ENCODE measurements at regions of chr4 and their contacts with region 1.

Region 1: DNA sequence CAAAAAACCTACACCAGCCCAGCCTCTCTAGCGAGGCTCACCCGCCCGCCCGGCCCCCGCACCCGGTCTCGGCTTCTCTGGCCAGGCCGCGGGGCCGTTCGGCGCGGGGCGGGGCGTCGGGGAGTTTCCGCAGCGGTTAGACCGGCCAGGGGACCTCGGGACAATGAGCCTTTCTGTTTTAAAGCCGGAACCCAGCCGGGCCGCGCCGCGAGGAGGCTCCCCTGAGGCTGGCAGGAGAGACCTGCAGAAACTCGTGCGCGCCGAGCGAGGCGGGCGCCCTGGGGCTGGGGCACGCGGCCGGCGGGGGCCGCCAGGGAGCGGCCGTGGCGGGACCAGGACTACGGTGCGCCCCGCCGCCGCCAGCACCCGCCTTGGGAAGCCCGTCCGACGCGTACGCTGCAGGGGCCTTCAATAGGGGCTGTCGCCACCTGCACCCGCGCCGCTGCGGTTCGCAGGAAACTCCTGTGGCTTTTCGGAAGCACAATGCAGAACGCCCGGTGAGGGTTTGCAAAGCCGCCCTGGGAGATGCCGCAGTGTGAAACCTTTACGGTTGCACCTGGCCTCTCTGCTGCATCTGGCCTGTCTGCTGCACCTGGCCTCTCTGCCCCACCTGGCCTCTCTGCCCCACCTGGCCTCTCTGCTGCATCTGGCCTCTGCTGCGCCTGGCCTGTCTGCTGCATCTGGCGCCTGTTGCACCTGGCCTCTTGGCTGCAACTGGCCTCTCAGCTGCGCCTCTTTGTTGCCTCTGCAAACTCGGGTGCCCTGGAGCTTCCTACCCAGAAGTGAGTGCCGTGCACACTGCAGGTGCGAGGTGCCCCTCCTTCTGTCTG is 63.9 kb downstream of the TRAPPC11 start:
- DNase-seq: peak; percentile 65 to 75
- ATAC-seq: peak; percentile 64 to 84 (median 79)
- H3K4me3 ChIP-seq: peak overlapping the region; percentile 41 to 66 (median 58)
- H3K27ac ChIP-seq: peak overlapping the region in 9 of 10 donors; percentile 30 to 75 (median 58)
- H3K4me1 ChIP-seq: peaks cover 0 to 18% (median 7%) of the 10 kb centered on the region in 9 donors
- H3K27me3 ChIP-seq: peaks cover 0 to 6% (median 0%) of the 10 kb centered on the region in 7 donors
- CTCF ChIP-seq: peak in 2 of 9 donors; percentile 24 to 47

Region 2: GRCh38 chr4:183797445-183798300 is 74.7 kb after region 1 on chr4:
- intact Hi-C with region 1: loop called in 2 of 10 experiments (anchors 5 to 10 kb)
- DNase-seq: peak in 1 of 2 donors; percentile 47
- ATAC-seq: peak; percentile 48 to 80 (median 66)
- H3K4me3 ChIP-seq: peak overlapping the region; percentile 58 to 77 (median 64)
- H3K27ac ChIP-seq: peak overlapping the region; percentile 27 to 86 (median 80)
- H3K4me1 ChIP-seq: peaks cover 0 to 33% (median 9%) of the 10 kb centered on the region in 9 donors
- H3K27me3 ChIP-seq: peaks cover 0 to 46% (median 17%) of the 10 kb centered on the region in 7 donors
- CTCF ChIP-seq: peak in 1 of 9 donors; percentile 2

Region 3: GRCh38 chr4:183808097-183808456 is 85.1 kb after region 1 on chr4:
- intact Hi-C with region 1: loop called in 1 of 10 experiments (anchors 10 kb)
- DNase-seq: no peak
- ATAC-seq: peak in 7 of 8 donors; percentile 37 to 81 (median 73)
- H3K4me3 ChIP-seq: peak overlapping the region in 7 of 10 donors; percentile 0 to 34 (median 23)
- H3K27ac ChIP-seq: peak overlapping the region in 9 of 10 donors; percentile 17 to 76 (median 64)
- H3K4me1 ChIP-seq: peaks cover 0 to 35% (median 16%) of the 10 kb centered on the region in 9 donors
- H3K27me3 ChIP-seq: no peaks in the 10 kb centered on the region
- CTCF ChIP-seq: no peak

Measured in heart right ventricle (tissue), 16 donors.